Right lobe of liver (tissue), 6 donors: ENCODE measurements at regions of chr9 and their contacts with region 1.

Region 1: DNA sequence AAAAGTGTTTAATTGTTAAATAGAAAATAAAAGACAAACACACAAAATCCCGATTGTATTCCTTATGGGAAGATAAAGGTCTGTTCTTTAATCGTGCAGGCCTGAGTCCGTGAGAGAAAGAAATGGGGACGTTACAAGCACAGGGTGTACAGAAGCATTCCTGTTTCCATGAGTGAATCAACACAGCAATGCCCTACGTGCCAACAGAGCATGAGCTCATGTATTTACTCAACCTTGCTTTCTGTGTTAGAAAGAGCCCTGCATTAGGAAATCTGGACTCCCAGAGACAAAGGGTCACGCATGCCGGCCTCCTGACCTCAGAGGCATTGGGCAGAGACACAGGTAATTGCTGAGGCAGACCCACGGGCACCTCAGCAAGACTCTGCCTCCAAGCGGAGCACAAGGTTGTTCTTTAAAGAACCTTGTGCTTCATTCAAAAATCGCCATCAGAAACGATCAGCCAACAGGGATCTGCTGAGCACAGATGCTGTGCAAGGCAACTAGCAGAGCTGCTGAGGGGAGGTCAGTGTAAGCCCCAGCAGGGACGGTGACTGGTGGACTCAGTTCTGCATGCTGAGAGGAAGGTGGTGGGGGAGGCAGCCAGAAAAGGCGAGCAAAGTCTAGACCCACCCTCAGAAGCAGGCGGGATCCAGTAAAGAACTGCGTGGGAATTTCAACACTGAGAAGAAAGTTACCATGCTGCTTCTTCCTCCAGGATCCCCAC is 101.0 kb downstream of the TLE1 start:
- DNase-seq: peak; percentile 81 to 93 (median 89)
- ATAC-seq: peak; percentile 79 to 92 (median 86)
- H3K4me3 ChIP-seq: no peak overlapping the region
- H3K27ac ChIP-seq: peak overlapping the region; percentile 48 to 90 (median 80)
- H3K4me1 ChIP-seq: peaks cover 0 to 46% (median 16%) of the 10 kb centered on the region in 4 donors
- H3K27me3 ChIP-seq: no peaks in the 10 kb centered on the region
- CTCF ChIP-seq: peak in 1 of 4 donors; percentile 16
- POLR2A ChIP-seq: peak; percentile 34

Region 2: GRCh38 chr9:81529556-81530195 is 58.6 kb before region 1 on chr9:
- intact Hi-C with region 1: loop called in 1 of 2 experiments (anchors 10 kb)
- DNase-seq: peak in 1 of 3 donors; percentile 30
- ATAC-seq: peak; percentile 43 to 88 (median 64)
- H3K4me3 ChIP-seq: no peak overlapping the region
- H3K27ac ChIP-seq: peak overlapping the region in 1 of 3 donors; percentile 16
- H3K4me1 ChIP-seq: peaks cover 0 to 6% (median 3%) of the 10 kb centered on the region in 4 donors
- H3K27me3 ChIP-seq: no peaks in the 10 kb centered on the region
- CTCF ChIP-seq: no peak
- POLR2A ChIP-seq: no peak

Region 3: DNA sequence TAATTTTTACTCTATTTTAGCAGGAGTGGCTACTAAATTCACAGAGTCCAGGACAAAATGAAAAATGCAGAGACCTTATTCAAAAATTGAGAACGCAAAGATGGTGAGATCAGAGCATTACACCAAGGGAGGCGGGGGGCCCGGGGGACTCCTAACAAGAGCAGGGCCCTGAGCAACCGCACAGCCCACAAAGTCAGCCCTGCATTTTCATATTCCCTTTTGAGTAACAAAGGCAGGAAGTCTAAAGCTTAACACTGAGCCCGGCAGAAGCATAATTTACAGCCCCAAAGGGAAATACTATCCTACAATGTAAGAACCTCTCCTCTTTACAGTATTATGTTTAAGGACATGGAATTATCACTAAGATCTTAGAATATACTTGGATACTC is 31.7 kb after region 1 on chr9:
- intact Hi-C with region 1: no loop called
- DNase-seq: no peak
- ATAC-seq: no peak
- H3K4me3 ChIP-seq: no peak overlapping the region
- H3K27ac ChIP-seq: no peak overlapping the region
- H3K4me1 ChIP-seq: no peaks in the 10 kb centered on the region
- H3K27me3 ChIP-seq: no peaks in the 10 kb centered on the region
- CTCF ChIP-seq: no peak
- POLR2A ChIP-seq: no peak

Region 4: DNA sequence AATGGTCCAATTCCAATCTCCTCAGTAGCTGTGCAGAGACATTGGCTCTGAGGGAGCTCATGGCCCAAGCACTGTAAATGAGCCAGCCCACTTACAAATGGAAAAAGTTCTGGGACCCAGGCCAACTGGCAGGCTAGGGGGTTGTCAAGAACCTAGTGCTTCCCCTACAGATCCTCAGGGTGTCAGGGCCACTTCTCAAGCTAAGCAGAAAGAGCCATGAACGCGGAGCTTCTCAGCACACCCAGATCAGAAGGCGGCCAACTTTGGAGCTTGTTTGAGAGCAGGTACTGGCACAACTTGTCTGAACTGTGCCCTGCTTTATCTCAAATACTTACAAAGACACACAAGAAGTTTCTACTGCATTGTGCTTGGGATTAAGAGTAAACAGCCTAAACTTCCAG is 83.6 kb after region 1 on chr9:
- intact Hi-C with region 1: no loop called
- DNase-seq: peak; percentile 34 to 74 (median 72)
- ATAC-seq: peak; percentile 64 to 83 (median 68)
- H3K4me3 ChIP-seq: no peak overlapping the region
- H3K27ac ChIP-seq: peak overlapping the region in 1 of 3 donors; percentile 15
- H3K4me1 ChIP-seq: peaks cover 0 to 38% (median 13%) of the 10 kb centered on the region in 4 donors
- H3K27me3 ChIP-seq: no peaks in the 10 kb centered on the region
- CTCF ChIP-seq: no peak
- POLR2A ChIP-seq: no peak